ENCODE measurements at regions of chr6 and their contacts with region 1.

Region 1: GRCh38 chr6:97186416-97186999 is 96.5 kb downstream of the MMS22L start:
- DNase-seq: peak; percentile 66
- ATAC-seq: peak; percentile 93
- H3K4me3 ChIP-seq: no peak overlapping the region
- H3K27ac ChIP-seq: no peak overlapping the region
- H3K4me1 ChIP-seq: peaks cover 10% of the 10 kb centered on the region
- H3K27me3 ChIP-seq: no peaks in the 10 kb centered on the region
- CTCF ChIP-seq: peak; percentile 83
- EP300 ChIP-seq: no peak
- POLR2A ChIP-seq: no peak
- RAD21 ChIP-seq: peak; percentile 57

Region 2: GRCh38 chr6:97009781-97010492 is 176.6 kb before region 1 on chr6:
- CTCF ChIA-PET with region 1: no interaction called
- POLR2A ChIA-PET with region 1: no interaction called
- in situ Hi-C with region 1: no loop called
- intact Hi-C with region 1: no loop called
- DNase-seq: no peak
- ATAC-seq: no peak
- H3K4me3 ChIP-seq: no peak overlapping the region
- H3K27ac ChIP-seq: no peak overlapping the region
- H3K4me1 ChIP-seq: no peaks in the 10 kb centered on the region
- H3K27me3 ChIP-seq: no peaks in the 10 kb centered on the region
- CTCF ChIP-seq: no peak
- EP300 ChIP-seq: no peak
- POLR2A ChIP-seq: no peak
- RAD21 ChIP-seq: no peak

Region 3: DNA sequence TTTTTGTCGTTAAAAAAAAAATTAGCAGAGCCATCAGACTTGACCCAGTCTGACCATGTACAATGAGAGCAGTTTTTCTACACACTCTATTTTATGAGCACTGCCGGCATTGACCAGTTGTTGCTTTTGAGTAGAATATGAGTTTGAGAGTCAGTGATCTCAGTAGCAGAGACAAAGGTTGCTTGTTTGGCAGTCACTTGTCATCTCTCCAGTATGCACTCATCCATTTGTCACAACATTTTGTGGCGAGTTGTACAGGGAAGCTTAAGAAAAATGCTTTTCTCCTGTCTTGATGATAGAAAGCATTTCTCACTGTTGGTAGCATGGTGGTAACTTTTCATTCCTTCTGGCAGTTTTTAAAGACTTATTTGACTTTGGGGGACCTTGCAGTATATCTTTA is 63.4 kb before region 1 on chr6:
- CTCF ChIA-PET with region 1: no interaction called
- POLR2A ChIA-PET with region 1: no interaction called
- in situ Hi-C with region 1: no loop called
- intact Hi-C with region 1: no loop called
- DNase-seq: no peak
- ATAC-seq: no peak
- H3K4me3 ChIP-seq: no peak overlapping the region
- H3K27ac ChIP-seq: no peak overlapping the region
- H3K4me1 ChIP-seq: no peaks in the 10 kb centered on the region
- H3K27me3 ChIP-seq: no peaks in the 10 kb centered on the region
- CTCF ChIP-seq: no peak
- EP300 ChIP-seq: no peak
- POLR2A ChIP-seq: no peak
- RAD21 ChIP-seq: no peak

Region 4: DNA sequence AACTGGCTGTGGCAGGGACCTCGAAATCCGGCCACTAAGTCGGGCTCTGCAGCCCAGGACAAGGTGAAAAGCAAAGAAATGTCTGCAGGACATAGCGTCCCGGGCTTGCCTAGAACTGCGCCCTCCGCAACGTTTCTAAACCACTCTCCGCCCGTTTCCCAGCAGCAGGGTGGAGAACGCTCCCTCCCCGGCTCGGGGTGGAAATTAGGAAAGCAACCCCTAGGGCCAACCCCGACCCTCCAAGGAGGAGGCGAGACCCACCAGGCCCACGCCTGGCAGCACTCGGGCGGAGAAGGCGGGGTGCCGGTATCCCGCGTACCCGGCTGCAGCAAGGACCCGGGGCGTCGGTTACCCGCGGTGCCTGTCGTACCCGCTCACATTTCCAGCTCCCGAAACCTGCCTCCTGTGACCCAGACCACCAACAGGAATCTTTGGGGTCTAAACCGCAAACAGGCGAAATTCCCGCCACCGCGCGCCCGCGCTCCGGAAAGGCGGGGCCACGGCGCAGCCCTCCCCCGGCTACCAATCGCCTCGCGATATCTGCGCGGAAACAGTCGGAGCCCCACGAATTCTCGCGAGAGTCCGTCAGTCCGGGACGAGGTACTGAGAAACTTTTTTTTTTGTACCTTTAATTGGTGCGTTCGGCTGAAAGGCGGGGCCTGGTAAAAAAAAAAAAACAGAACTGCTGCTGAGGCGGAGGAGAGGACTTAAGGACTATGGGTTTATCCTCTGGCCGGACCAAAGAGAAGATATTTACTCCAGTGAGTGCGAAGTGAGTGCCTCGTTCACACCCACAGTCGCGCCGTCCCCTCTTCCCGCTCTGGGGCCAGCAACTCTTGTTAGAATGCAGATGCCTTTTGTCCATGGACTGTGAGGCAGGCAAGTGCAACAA is 96.5 kb after region 1 on chr6 and contains the start of gene MMS22L:
- CTCF ChIA-PET with region 1: no interaction called
- POLR2A ChIA-PET with region 1: no interaction called
- in situ Hi-C with region 1: no loop called
- intact Hi-C with region 1: loop called (anchors 2 kb)
- DNase-seq: peak; percentile 92
- ATAC-seq: peak; percentile 97
- H3K4me3 ChIP-seq: peak within 1 kb of the TSS; percentile 77 to 96 (median 91)
- H3K27ac ChIP-seq: peak within 1 kb of the TSS; percentile 76
- H3K4me1 ChIP-seq: peaks cover 16% of the 10 kb centered on the region
- H3K27me3 ChIP-seq: no peaks in the 10 kb centered on the region; a peak in 1 of 5 replicates
- CTCF ChIP-seq: no peak
- EP300 ChIP-seq: no peak
- POLR2A ChIP-seq: peak; percentile 36 to 65; a peak in 3 of 4 replicates
- RAD21 ChIP-seq: 0 out of 2 replicates have a peak, but pooled peaks have one; percentile 5
- total RNA-seq, gene MMS22L: 32.9 and 51.8 TPM in 2 replicates

Region 5: DNA sequence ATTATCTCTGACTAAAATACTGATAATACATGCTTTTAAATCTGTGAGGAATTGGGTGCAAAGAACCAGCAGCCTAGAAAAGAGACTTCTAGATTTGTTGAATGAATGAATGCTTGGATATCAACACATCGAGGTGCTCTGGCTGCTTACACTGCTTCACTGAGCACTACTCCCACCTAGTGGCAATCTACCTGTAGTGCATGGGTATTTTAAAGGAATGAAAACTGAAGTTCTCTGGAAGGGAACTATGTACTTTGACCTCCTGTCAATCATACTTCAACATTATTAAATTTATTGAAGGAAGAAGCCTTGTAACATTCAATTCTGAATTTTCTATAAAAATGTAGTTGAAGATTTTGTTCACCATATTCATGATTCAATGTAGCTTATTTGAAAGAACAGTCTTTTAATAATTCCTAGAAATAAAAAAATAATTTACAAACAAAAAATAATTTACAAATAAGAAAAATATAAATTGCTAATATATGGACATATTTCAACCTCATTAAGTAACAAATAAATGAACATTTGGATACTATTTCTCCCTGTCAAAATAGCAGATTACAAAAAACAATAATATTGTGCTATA is 207.7 kb after region 1 on chr6:
- CTCF ChIA-PET with region 1: interaction called, 37 read pairs
- POLR2A ChIA-PET with region 1: no interaction called
- in situ Hi-C with region 1: loop called (anchors 10 kb)
- intact Hi-C with region 1: loop called (anchors 1 kb)
- DNase-seq: peak; percentile 65
- ATAC-seq: peak; percentile 61
- H3K4me3 ChIP-seq: no peak overlapping the region
- H3K27ac ChIP-seq: no peak overlapping the region
- H3K4me1 ChIP-seq: no peaks in the 10 kb centered on the region
- H3K27me3 ChIP-seq: no peaks in the 10 kb centered on the region
- CTCF ChIP-seq: peak; percentile 85
- EP300 ChIP-seq: no peak
- POLR2A ChIP-seq: no peak
- RAD21 ChIP-seq: peak; percentile 68

Region 6: GRCh38 chr6:97437087-97437486 is 250.6 kb after region 1 on chr6:
- CTCF ChIA-PET with region 1: no interaction called
- POLR2A ChIA-PET with region 1: no interaction called
- in situ Hi-C with region 1: no loop called
- intact Hi-C with region 1: loop called (anchors 1 kb)
- DNase-seq: peak; percentile 31
- ATAC-seq: peak; percentile 77
- H3K4me3 ChIP-seq: no peak overlapping the region
- H3K27ac ChIP-seq: no peak overlapping the region
- H3K4me1 ChIP-seq: no peaks in the 10 kb centered on the region
- H3K27me3 ChIP-seq: no peaks in the 10 kb centered on the region
- CTCF ChIP-seq: peak; percentile 49
- EP300 ChIP-seq: no peak
- POLR2A ChIP-seq: no peak
- RAD21 ChIP-seq: no peak

Region 7: DNA sequence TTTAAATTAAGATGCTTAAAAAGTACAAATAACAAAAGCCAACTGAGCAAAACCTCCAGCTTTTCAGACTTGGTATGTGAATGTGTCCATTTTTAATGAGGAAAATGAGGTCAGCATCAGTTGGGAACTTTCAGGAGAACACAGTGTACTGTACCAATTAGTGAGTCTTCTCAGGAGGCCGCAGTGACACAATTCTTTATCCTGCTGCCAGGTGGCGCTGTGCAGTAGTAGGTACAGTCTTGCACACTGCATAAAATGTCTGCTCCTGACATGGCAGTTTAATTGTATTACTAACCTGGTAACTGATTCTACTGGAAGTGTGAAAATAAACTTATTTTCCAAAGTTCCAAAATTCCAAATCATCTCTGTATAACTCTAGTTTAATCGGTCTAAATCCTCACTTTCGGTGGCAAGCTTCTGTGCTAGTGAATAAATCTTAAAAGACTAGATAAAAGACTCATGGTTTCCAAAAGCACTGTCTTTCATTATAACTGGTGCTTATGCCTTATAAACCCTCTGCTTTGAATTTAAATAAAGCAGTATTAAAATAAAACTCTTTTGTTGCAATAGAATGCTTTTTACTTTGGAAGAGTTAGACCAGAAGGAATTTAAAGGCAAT is 311.3 kb after region 1 on chr6:
- CTCF ChIA-PET with region 1: no interaction called
- POLR2A ChIA-PET with region 1: no interaction called
- in situ Hi-C with region 1: no loop called
- intact Hi-C with region 1: loop called (anchors 1 kb)
- DNase-seq: peak; percentile 59
- ATAC-seq: peak; percentile 99
- H3K4me3 ChIP-seq: no peak overlapping the region
- H3K27ac ChIP-seq: no peak overlapping the region
- H3K4me1 ChIP-seq: no peaks in the 10 kb centered on the region
- H3K27me3 ChIP-seq: no peaks in the 10 kb centered on the region
- CTCF ChIP-seq: peak; percentile 81
- EP300 ChIP-seq: no peak
- POLR2A ChIP-seq: no peak
- RAD21 ChIP-seq: peak; percentile 43; the same call in 1 of the 2 replicates

Region 8: DNA sequence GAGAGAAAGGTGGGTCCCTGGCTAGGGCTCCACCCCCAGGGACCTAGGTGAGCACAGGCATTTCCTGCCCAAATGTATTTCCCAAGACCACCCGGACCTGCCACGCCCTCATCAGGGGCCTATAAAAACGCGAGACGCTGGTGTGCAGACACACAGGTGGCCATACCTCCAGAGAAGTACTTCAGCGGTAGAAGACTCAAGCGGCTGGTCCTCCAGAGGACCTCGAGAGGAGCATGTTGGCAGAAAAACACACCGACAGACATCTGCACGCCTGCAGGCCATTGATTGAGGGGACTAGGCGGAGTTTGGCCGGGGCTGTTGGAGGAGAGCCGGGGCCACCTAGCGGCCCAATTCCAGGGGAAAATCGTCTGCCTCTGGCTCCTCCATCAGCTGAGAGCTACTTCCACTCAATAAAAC is 792.4 kb after region 1 on chr6:
- CTCF ChIA-PET with region 1: no interaction called
- POLR2A ChIA-PET with region 1: no interaction called
- in situ Hi-C with region 1: no loop called
- intact Hi-C with region 1: loop called (anchors 2 kb)
- DNase-seq: peak; percentile 25
- ATAC-seq: peak; percentile 100
- H3K4me3 ChIP-seq: no peak overlapping the region
- H3K27ac ChIP-seq: no peak overlapping the region
- H3K4me1 ChIP-seq: no peaks in the 10 kb centered on the region
- H3K27me3 ChIP-seq: no peaks in the 10 kb centered on the region; a peak in 1 of 5 replicates
- CTCF ChIP-seq: peak; percentile 63
- EP300 ChIP-seq: no peak
- POLR2A ChIP-seq: no peak
- RAD21 ChIP-seq: no peak

Region 9: GRCh38 chr6:98839781-98840361 is 1653.4 kb after region 1 on chr6:
- CTCF ChIA-PET with region 1: no interaction called
- POLR2A ChIA-PET with region 1: no interaction called
- in situ Hi-C with region 1: no loop called
- intact Hi-C with region 1: loop called (anchors 2 kb)
- DNase-seq: peak; percentile 27
- ATAC-seq: peak; percentile 65
- H3K4me3 ChIP-seq: no peak overlapping the region
- H3K27ac ChIP-seq: no peak overlapping the region
- H3K4me1 ChIP-seq: peaks cover 9% of the 10 kb centered on the region; the same call in 1 of the 2 replicates
- H3K27me3 ChIP-seq: peaks cover 5 to 77% of the 10 kb centered on the region in 2 experiments
- CTCF ChIP-seq: peak; percentile 58
- EP300 ChIP-seq: no peak
- POLR2A ChIP-seq: no peak
- RAD21 ChIP-seq: no peak

Measured in HepG2 (cell line).